ENCODE measurements at regions of chr10 and their contacts with region 1.

Region 1: GRCh38 chr10:47340608-47341170 is 7.5 kb upstream of the RBP3 start:
- DNase-seq: peak; percentile 49
- H3K4me3 Mint-ChIP-seq: no peak overlapping the region
- H3K27ac Mint-ChIP-seq: no peak overlapping the region
- H3K4me1 Mint-ChIP-seq: no peaks in the 10 kb centered on the region
- H3K27me3 Mint-ChIP-seq: peaks cover 6% of the 10 kb centered on the region

Region 2: DNA sequence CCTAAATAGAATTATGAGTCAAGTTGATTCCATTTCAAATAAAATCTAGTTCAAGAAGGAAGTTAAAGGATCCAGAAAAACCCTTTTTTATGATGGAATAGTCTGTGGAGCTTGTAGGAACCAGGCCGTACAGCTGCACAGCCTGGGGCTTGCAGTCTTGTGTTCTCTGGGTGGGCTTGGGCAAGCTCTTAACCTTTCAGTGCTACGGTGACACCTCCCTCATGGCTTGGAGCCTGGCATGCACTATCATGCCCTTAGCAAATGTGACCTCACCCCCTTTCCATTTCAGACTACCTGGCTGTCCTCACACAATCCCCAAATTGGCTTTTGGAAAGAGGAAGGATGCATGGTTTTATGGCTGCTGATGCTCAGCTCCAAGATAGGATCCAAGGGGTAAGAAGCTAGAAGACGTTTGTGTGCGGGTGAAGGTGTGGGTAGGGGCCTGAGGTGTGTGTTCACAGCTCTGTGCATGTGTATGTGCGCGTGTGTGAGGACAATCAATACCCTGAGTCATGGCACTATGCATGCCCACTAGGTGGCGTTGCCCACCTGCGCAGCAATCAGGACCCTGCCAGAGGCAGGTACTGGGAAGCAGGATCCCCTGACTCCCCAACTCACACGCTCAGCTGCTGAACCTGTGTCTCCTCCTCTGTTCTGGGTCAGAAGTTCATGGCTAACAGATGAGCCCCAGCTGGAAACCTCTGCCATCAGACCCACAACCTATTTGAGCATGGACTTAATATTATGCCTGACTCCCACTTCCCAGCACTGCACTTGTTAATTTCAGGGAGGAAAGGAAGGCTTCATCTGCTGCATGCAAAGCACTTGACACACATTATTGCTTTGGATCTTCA is 316.1 kb before region 1 on chr10:
- intact Hi-C with region 1: loop called (anchors 1 kb)
- DNase-seq: peak; percentile 41
- H3K4me3 Mint-ChIP-seq: no peak overlapping the region
- H3K27ac Mint-ChIP-seq: no peak overlapping the region
- H3K4me1 Mint-ChIP-seq: no peaks in the 10 kb centered on the region
- H3K27me3 Mint-ChIP-seq: peaks cover 3% of the 10 kb centered on the region

Region 3: DNA sequence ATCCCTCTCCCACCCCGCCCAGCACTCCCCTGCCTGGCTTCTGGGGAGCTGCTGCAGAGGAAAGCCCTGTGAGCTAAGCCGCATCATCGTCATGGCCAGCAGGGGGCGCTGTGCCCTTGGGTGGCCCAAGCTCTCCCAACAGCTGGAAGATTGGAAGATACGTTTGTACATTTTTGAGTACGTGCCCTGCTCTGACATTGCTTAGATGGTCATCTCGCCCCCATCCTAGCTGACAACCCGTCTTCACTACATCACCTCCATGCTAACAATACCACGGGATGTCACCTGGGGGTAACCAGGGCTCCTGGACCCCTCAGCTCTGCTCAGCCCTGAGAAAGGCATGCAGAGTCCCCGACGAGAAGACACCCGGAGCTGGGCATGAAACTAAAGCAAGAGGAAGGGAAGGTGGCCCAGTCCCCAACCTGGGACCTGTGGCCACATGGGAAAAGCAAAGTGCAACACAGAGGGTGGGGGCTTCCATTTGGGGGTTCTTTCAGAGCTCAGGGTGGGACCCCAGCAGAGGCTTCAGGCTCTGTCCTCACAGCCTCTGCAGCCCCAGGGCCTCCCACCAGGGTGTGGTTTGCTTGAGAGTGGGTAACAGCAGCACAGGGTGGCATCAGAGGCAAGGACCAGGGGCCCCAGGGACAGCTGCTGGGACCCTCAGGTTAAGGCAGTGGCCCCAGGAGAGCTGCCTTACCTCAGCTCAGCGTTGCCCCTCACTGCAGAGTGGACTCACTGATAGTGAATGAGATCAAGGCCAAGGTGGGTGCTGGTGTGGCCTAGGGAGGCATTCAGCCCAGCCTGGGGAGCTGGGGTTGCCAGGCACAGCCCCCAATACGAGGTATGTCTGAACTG is 292.8 kb before region 1 on chr10:
- intact Hi-C with region 1: loop called (anchors 1 kb)
- DNase-seq: peak; percentile 54
- H3K4me3 Mint-ChIP-seq: no peak overlapping the region
- H3K27ac Mint-ChIP-seq: no peak overlapping the region
- H3K4me1 Mint-ChIP-seq: peaks cover 4% of the 10 kb centered on the region
- H3K27me3 Mint-ChIP-seq: peaks cover 2% of the 10 kb centered on the region

Region 4: GRCh38 chr10:47269294-47269693 is 71.4 kb before region 1 on chr10:
- intact Hi-C with region 1: no loop called
- DNase-seq: no peak
- H3K4me3 Mint-ChIP-seq: no peak overlapping the region
- H3K27ac Mint-ChIP-seq: no peak overlapping the region
- H3K4me1 Mint-ChIP-seq: peaks cover 15% of the 10 kb centered on the region
- H3K27me3 Mint-ChIP-seq: peaks cover 4% of the 10 kb centered on the region